CD4-positive, alpha-beta memory T cell (primary cell): ENCODE measurements at regions of chr2 and their contacts with region 1.

Region 1: GRCh38 chr2:64730551-64731262 is 77.0 kb upstream of the SERTAD2 start:
- DNase-seq: peak; percentile 44 to 75 (median 50)
- H3K4me3 ChIP-seq: peak overlapping the region; percentile 32 to 68
- H3K4me3 Mint-ChIP-seq: peak overlapping the region; percentile 83 to 94 (median 89)
- H3K27ac ChIP-seq: peak overlapping the region; percentile 72
- H3K27ac Mint-ChIP-seq: peak overlapping the region; percentile 95 to 98 (median 97)
- H3K4me1 ChIP-seq: peaks cover 42% of the 10 kb centered on the region
- H3K4me1 Mint-ChIP-seq: peaks cover 31 to 61% (median 43%) of the 10 kb centered on the region in 4 donors
- H3K27me3 ChIP-seq: no peaks in the 10 kb centered on the region
- H3K27me3 Mint-ChIP-seq: no peaks in the 10 kb centered on the region

Region 2: DNA sequence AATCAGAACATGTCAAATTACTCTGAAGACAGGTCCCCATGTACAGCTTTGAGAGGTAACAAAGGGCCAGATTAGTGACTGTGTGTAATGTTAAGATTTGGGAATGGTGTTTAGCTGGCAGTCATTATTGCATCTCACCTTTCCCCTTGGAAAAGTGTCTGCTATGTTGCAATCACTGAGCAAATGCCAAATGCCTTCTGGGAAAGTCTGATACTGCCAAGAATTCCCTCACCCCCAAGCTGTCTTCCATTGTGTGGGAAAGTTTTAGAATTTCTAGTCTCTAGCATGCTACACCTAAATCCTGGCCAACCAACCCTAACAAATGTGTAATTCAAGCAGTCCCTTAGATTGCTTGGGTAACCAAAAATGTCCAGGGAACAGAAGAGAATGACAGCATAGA is 572.9 kb before region 1 on chr2:
- CTCF ChIA-PET with region 1: no interaction called
- POLR2A ChIA-PET with region 1: no interaction called
- intact Hi-C with region 1: no loop called
- DNase-seq: no peak
- H3K4me3 ChIP-seq: no peak overlapping the region
- H3K4me3 Mint-ChIP-seq: no peak overlapping the region
- H3K27ac ChIP-seq: no peak overlapping the region
- H3K27ac Mint-ChIP-seq: no peak overlapping the region
- H3K4me1 ChIP-seq: no peaks in the 10 kb centered on the region
- H3K4me1 Mint-ChIP-seq: no peaks in the 10 kb centered on the region
- H3K27me3 ChIP-seq: no peaks in the 10 kb centered on the region
- H3K27me3 Mint-ChIP-seq: peaks cover 0 to 2% of the 10 kb centered on the region in 2 donors

Region 3: GRCh38 chr2:64622443-64623241 is 108.1 kb before region 1 on chr2:
- CTCF ChIA-PET with region 1: no interaction called
- POLR2A ChIA-PET with region 1: no interaction called
- intact Hi-C with region 1: no loop called
- DNase-seq: no peak
- H3K4me3 ChIP-seq: no peak overlapping the region
- H3K4me3 Mint-ChIP-seq: no peak overlapping the region
- H3K27ac ChIP-seq: no peak overlapping the region
- H3K27ac Mint-ChIP-seq: peak overlapping the region in 1 of 7 donors; percentile 24
- H3K4me1 ChIP-seq: no peaks in the 10 kb centered on the region
- H3K4me1 Mint-ChIP-seq: no peaks in the 10 kb centered on the region
- H3K27me3 ChIP-seq: no peaks in the 10 kb centered on the region
- H3K27me3 Mint-ChIP-seq: no peaks in the 10 kb centered on the region

Region 4: GRCh38 chr2:64666810-64667438 is 63.8 kb before region 1 on chr2:
- CTCF ChIA-PET with region 1: interaction called, 3 read pairs
- POLR2A ChIA-PET with region 1: interaction called, 14 read pairs
- intact Hi-C with region 1: no loop called
- DNase-seq: peak in 3 of 5 donors; percentile 12 to 25 (median 18)
- H3K4me3 ChIP-seq: no peak overlapping the region
- H3K4me3 Mint-ChIP-seq: peak overlapping the region; percentile 1 to 68 (median 35)
- H3K27ac ChIP-seq: no peak overlapping the region
- H3K27ac Mint-ChIP-seq: peak overlapping the region; percentile 61 to 94 (median 67)
- H3K4me1 ChIP-seq: peaks cover 34% of the 10 kb centered on the region
- H3K4me1 Mint-ChIP-seq: peaks cover 15 to 34% (median 25%) of the 10 kb centered on the region in 4 donors
- H3K27me3 ChIP-seq: no peaks in the 10 kb centered on the region
- H3K27me3 Mint-ChIP-seq: no peaks in the 10 kb centered on the region

Region 5: GRCh38 chr2:64742678-64743077 is 12.0 kb after region 1 on chr2:
- CTCF ChIA-PET with region 1: interaction called, 12 read pairs
- POLR2A ChIA-PET with region 1: interaction called, 172 read pairs
- intact Hi-C with region 1: no loop called
- DNase-seq: no peak
- H3K4me3 ChIP-seq: no peak overlapping the region
- H3K4me3 Mint-ChIP-seq: no peak overlapping the region
- H3K27ac ChIP-seq: no peak overlapping the region
- H3K27ac Mint-ChIP-seq: no peak overlapping the region
- H3K4me1 ChIP-seq: peaks cover under 1% of the 10 kb centered on the region
- H3K4me1 Mint-ChIP-seq: peaks cover 0 to 2% (median under 1%) of the 10 kb centered on the region in 4 donors
- H3K27me3 ChIP-seq: no peaks in the 10 kb centered on the region
- H3K27me3 Mint-ChIP-seq: no peaks in the 10 kb centered on the region

Region 6: DNA sequence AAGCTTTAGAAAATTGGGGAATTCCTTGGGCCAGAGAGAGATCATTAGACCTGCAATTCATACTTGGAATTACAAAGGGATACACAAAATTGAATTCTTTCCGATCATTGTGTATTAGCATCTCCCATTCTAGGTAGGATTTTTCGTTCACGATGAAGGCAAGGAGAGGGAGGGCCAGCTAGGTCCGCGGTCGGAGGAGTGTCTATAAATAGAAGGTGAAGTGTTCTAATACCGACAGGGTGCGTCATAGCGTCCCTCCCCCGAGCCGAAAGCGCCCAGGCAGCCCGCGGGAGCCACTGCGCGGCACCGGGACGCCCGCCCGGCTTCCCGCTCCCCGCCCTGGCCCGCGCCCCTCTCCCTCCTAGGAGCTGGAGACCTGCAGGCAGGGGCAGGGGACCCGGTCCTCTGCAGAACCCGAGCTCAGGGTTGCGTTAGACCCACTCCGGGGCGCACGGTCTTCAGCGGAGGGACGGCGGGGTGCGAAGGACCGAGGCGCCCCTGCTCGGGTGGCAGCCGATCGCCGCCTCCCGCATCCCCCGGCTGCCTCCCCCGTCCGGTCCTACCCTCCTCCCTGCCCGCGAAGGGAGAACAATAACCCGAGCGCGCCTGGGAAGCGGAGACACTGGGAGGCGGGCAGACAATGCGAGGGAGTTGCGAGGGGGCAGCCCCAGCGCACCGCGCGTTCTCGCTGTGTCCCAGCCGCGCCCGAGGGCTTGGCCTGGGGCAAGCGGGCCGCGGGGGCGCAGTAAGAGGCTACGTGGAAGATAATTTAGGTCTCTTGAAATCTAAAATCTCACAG is 37.2 kb after region 1 on chr2:
- CTCF ChIA-PET with region 1: interaction called, 7 read pairs
- POLR2A ChIA-PET with region 1: interaction called, 7 read pairs
- intact Hi-C with region 1: loop called (anchors 2 kb)
- DNase-seq: peak; percentile 66 to 86 (median 69)
- H3K4me3 ChIP-seq: peak overlapping the region; percentile 47 to 72
- H3K4me3 Mint-ChIP-seq: peak overlapping the region; percentile 86 to 99 (median 94)
- H3K27ac ChIP-seq: peak overlapping the region; percentile 90
- H3K27ac Mint-ChIP-seq: peak overlapping the region; percentile 81 to 97 (median 96)
- H3K4me1 ChIP-seq: peaks cover 14% of the 10 kb centered on the region
- H3K4me1 Mint-ChIP-seq: peaks cover 12 to 23% (median 13%) of the 10 kb centered on the region in 4 donors
- H3K27me3 ChIP-seq: no peaks in the 10 kb centered on the region
- H3K27me3 Mint-ChIP-seq: no peaks in the 10 kb centered on the region